IMR-90 (cell line): ENCODE measurements at regions of chr10 and their contacts with region 1.

Region 1: DNA sequence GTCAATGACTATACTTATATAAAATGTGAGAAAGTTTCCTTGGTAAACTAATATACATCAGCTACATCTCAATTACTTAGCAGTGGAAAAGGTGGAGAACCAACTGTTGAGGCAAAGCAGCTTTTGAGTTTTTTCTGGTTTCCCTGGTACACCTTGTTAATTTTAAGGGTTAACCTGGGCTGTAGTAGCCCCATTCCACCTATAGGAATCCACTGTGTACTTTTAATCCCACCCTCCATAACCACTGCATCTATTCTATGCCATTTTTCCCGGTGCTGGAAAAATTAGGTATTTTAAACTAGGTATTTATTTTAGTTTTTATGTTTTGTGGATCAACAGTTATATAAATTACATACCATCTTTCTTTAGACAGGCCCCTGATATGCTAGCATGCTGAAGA is 42.4 kb downstream of the NRBF2 start:
- DNase-seq: no peak
- ATAC-seq: no peak
- H3K4me3 ChIP-seq: no peak overlapping the region
- H3K27ac ChIP-seq: no peak overlapping the region
- H3K4me1 ChIP-seq: no peaks in the 10 kb centered on the region
- H3K27me3 ChIP-seq: no peaks in the 10 kb centered on the region
- CTCF ChIP-seq: no peak
- POLR2A ChIP-seq: no peak
- RAD21 ChIP-seq: no peak

Region 2: DNA sequence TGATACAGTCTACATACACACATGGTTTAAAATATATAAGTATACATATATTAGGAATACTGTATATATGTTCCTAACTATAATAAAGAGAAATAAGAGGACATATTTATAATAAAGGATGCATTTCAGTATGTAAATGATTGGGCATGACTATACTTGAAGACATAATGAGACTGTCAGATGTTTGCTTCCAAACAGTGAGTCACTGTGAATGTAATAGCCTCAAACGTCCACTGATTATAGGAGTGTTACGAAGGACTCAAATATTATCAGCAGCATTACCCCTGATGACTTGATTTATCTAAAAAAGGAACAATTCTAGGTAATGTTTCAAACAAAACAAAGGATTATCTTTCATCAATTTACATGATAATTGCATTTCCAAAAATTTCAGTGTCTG is 82.3 kb before region 1 on chr10:
- CTCF ChIA-PET with region 1: no interaction called
- POLR2A ChIA-PET with region 1: no interaction called
- dilution Hi-C with region 1: no loop called
- in situ Hi-C with region 1: no loop called
- intact Hi-C with region 1: no loop called
- DNase-seq: peak; percentile 14
- ATAC-seq: peak; percentile 44; the same call in 1 of the 2 replicates
- H3K4me3 ChIP-seq: no peak overlapping the region
- H3K27ac ChIP-seq: no peak overlapping the region
- H3K4me1 ChIP-seq: no peaks in the 10 kb centered on the region
- H3K27me3 ChIP-seq: no peaks in the 10 kb centered on the region; the same call in 1 of the 2 replicates
- CTCF ChIP-seq: no peak
- POLR2A ChIP-seq: no peak
- RAD21 ChIP-seq: no peak

Region 3: GRCh38 chr10:63390521-63390920 is 215.0 kb after region 1 on chr10:
- CTCF ChIA-PET with region 1: interaction called, 10 read pairs
- POLR2A ChIA-PET with region 1: no interaction called
- dilution Hi-C with region 1: no loop called
- in situ Hi-C with region 1: no loop called
- intact Hi-C with region 1: no loop called
- DNase-seq: no peak
- ATAC-seq: no peak
- H3K4me3 ChIP-seq: no peak overlapping the region
- H3K27ac ChIP-seq: no peak overlapping the region
- H3K4me1 ChIP-seq: no peaks in the 10 kb centered on the region
- H3K27me3 ChIP-seq: no peaks in the 10 kb centered on the region
- CTCF ChIP-seq: no peak
- POLR2A ChIP-seq: no peak
- RAD21 ChIP-seq: no peak